ENCODE measurements at regions of chr1 and their contacts with region 1.

Region 1: DNA sequence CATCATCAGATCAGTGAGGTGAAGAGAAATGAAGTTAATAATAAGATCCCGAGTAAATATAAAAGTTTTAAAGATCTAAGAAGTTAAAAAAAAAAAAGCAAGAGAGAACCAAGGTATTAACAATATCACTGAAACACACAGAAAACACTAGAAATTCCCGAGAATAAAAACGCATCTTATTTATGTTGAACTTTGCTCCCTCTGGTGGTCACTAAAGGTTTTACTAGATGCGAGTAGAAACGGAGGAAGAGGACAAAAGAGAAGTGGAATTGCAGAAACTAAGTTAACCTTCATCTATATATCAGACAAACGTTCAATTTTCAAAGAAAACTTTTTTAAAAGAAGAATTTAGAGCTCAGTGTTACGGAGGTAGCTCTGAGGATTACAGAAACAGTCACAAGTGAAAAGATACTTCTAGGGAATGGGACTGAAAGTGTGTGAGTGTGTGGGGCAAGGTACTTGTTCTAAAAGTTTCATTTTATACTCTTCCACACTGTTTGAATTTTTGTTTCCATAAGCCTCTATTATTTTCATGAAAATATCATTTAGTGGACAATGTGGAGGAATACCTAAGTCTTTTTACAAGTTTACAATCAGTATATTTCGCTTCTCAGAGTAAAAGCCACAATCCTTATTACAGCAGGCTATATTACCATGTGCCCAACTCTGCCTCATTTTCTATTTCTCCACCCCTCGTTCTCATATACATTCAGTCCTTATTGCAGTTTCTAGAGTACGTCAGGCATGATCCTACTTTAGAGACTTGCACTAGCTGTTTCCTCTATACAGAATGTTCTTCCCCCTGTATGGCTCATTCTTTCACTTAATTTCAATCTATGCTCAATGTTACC is 19.7 kb downstream of the ACBD6 start:
- DNase-seq: peak in 3 of 35 experiments; percentile 15 to 69 (median 15)
- ATAC-seq: peak in 3 of 4 experiments; percentile 35 to 52 (median 51)
- H3K4me3 ChIP-seq: no peak overlapping the region
- H3K4me3 Mint-ChIP-seq: no peak overlapping the region
- H3K27ac ChIP-seq: no peak overlapping the region
- H3K27ac Mint-ChIP-seq: no peak overlapping the region
- H3K4me1 ChIP-seq: no peaks in the 10 kb centered on the region
- H3K4me1 Mint-ChIP-seq: peaks cover 13 to 34% (median 20%) of the 10 kb centered on the region in 3 donors
- H3K27me3 ChIP-seq: no peaks in the 10 kb centered on the region
- H3K27me3 Mint-ChIP-seq: no peaks in the 10 kb centered on the region

Region 2: DNA sequence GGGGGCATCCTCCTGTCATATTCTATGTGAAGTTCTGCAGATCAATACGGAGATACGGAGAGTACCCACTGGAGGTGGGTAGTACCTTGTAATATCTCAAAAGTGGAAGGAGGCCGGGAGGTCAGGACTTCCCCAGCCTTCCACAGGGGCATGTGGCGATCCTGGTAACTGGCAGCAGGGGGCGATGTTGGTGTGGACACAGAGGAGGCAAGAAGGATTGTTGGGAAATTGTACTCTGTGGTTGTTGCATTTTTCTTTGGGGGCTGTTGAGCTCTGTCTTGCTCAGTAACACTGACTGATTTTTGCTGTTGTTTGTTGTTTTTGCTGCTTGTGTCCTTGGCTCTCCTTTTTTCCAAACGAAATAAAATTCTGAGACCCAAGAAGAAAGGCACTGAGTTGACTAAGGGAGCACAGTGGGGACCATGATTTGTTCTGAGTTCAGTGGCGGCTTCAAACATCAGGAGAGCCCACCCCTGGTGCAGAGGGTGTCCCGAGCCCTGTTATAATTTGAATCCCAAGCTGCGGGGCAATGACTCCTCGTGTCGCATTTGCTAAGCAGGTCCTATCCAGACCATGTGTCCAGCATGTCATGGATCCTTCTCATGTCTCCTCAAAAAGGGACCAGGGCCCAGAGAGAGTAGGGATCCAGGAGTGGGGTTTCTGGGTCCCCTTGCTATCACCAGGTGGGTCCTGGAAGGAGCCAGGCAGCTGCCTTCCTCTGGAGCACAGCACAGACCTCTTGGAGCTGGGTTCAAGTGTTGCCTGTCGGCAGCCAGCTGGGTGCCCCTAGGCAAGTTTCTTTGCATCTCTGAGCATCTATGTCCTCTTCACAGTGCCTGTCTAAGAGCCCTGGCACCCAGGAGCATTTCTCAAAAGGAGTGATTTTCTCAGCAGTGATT is 229.8 kb before region 1 on chr1:
- CTCF ChIA-PET with region 1: interaction called, 5 to 16 read pairs
- POLR2A ChIA-PET with region 1: no interaction called
- DNase-seq: peak in 33 of 35 experiments; percentile 23 to 70 (median 50)
- ATAC-seq: peak; percentile 50 to 69 (median 52)
- H3K4me3 ChIP-seq: no peak overlapping the region
- H3K4me3 Mint-ChIP-seq: no peak overlapping the region
- H3K27ac ChIP-seq: no peak overlapping the region
- H3K27ac Mint-ChIP-seq: no peak overlapping the region
- H3K4me1 ChIP-seq: no peaks in the 10 kb centered on the region
- H3K4me1 Mint-ChIP-seq: peaks cover 2 to 4% (median 3%) of the 10 kb centered on the region in 3 donors
- H3K27me3 ChIP-seq: peaks cover 0 to 90% of the 10 kb centered on the region in 2 experiments
- H3K27me3 Mint-ChIP-seq: peaks cover 54 to 73% of the 10 kb centered on the region in 2 donors

Region 3: DNA sequence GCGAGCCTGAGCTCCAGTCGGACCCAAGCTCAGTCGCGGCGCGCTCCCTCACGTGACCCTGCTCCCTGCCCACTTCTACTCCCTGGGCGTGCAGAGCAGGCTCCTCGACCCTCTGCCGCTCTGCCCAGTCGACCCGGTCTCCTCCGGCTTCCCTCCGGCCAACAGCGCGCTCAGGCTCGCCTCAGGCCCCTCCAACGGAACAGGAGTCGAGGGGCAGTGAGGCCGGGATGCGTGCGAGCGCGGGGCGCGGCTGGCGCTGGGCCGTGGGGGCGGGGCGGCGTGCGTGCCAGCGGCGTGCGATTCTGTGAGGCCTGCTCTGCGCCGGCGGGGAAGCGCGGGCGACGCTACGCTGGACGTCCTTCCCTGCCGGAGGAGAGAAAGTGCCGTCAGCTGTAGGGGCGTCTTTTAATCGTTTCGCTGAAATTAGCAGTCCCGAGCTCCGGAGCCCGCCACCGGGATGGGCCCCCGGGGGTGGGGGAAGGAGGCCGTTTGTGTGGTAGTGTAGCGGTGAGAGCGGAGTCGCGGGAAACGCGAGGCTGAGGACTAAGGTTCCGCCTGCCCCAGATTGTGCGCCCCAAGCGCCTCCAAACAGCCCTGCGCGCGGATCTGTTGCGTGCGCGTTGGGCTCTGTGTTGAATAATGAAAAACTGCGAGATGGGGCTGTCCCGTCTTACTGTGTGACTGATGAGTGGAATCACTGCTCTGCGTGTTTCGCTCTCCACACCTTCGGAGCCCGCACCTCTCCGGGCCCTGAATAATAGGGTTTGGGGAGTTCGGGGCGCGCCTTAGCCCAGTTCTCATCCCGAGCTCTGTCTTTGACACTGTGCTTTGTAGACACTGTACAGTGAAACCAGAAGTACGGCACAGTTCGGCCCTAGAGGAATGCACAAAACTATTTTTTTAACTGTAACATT is 20.0 kb after region 1 on chr1 and contains the start of gene ACBD6:
- CTCF ChIA-PET with region 1: interaction called, 12 to 20 read pairs
- POLR2A ChIA-PET with region 1: interaction called in 1 of 2 experiments, 3 read pairs
- DNase-seq: peak; percentile 77 to 90 (median 83)
- ATAC-seq: peak; percentile 89 to 92 (median 90)
- H3K4me3 ChIP-seq: peak within 1 kb of the TSS; percentile 97 to 99
- H3K4me3 Mint-ChIP-seq: peak within 1 kb of the TSS; percentile 92 to 96 (median 95)
- H3K27ac ChIP-seq: peak within 1 kb of the TSS; percentile 87
- H3K27ac Mint-ChIP-seq: peak within 1 kb of the TSS; percentile 96 to 99
- H3K4me1 ChIP-seq: peaks cover 21 to 22% of the 10 kb centered on the region in 2 experiments
- H3K4me1 Mint-ChIP-seq: peaks cover 29 to 40% (median 39%) of the 10 kb centered on the region in 3 donors
- H3K27me3 ChIP-seq: no peaks in the 10 kb centered on the region
- H3K27me3 Mint-ChIP-seq: no peaks in the 10 kb centered on the region
- total RNA-seq, gene ACBD6: 44.3 to 58.5 (median 53.0) TPM

Measured in T-cell (primary cell).